MCF 10A (cell line): ENCODE measurements at regions of chr6 and their contacts with region 1.

Region 1: GRCh38 chr6:85482905-85483700 is 33.2 kb downstream of the NT5E start:
- DNase-seq: peak; percentile 75
- H3K4me3 Mint-ChIP-seq: no peak overlapping the region
- H3K27ac Mint-ChIP-seq: no peak overlapping the region
- H3K4me1 Mint-ChIP-seq: peaks cover 6% of the 10 kb centered on the region
- H3K27me3 Mint-ChIP-seq: no peaks in the 10 kb centered on the region
- CTCF ChIP-seq: peak; percentile 96

Region 2: GRCh38 chr6:85344996-85345395 is 138.1 kb before region 1 on chr6:
- CTCF ChIA-PET with region 1: interaction called, 22 read pairs
- POLR2A ChIA-PET with region 1: no interaction called
- intact Hi-C with region 1: no loop called
- DNase-seq: no peak
- H3K4me3 Mint-ChIP-seq: no peak overlapping the region
- H3K27ac Mint-ChIP-seq: no peak overlapping the region
- H3K4me1 Mint-ChIP-seq: no peaks in the 10 kb centered on the region
- H3K27me3 Mint-ChIP-seq: no peaks in the 10 kb centered on the region
- CTCF ChIP-seq: no peak

Region 3: GRCh38 chr6:85360794-85361642 is 122.1 kb before region 1 on chr6:
- CTCF ChIA-PET with region 1: interaction called, 285 read pairs
- POLR2A ChIA-PET with region 1: interaction called, 26 read pairs
- intact Hi-C with region 1: no loop called
- DNase-seq: peak; percentile 94
- H3K4me3 Mint-ChIP-seq: no peak overlapping the region
- H3K27ac Mint-ChIP-seq: peak overlapping the region; percentile 93
- H3K4me1 Mint-ChIP-seq: peaks cover 22% of the 10 kb centered on the region
- H3K27me3 Mint-ChIP-seq: no peaks in the 10 kb centered on the region
- CTCF ChIP-seq: no peak

Region 4: DNA sequence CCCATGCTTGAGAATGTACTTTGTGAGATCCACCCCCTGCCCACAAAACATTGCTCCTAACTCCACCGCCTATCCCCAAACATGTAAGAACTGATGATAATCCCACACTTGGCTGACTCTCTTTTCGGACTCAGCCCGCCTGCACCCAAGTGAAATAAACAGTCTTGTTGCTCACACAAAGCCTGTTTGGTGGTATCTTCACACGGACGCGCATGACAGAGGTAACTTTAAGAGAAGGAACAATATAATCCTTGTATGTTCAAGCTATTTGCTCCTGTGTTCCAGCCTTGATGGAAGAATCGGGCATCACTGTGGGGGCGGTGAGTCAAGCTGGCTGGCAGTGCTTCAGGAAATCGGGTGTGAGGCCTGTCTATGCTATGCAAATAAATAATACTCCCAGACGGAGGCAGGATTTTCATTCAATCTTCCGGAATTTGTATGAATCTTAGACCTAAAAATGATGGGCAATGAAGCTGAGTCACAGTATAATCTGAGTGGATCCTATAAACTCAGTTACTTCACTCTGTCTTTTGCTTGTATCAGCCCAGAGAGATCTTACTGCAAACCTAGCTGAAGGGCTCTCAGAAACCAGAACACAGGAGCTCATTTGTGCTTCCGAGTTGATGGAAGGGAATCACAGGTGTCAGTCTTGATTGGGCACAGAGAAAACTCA is 78.5 kb before region 1 on chr6:
- CTCF ChIA-PET with region 1: interaction called, 18 read pairs
- POLR2A ChIA-PET with region 1: interaction called, 4 read pairs
- intact Hi-C with region 1: loop called (anchors 1 kb)
- DNase-seq: peak; percentile 92
- H3K4me3 Mint-ChIP-seq: peak overlapping the region; percentile 48
- H3K27ac Mint-ChIP-seq: peak overlapping the region; percentile 93
- H3K4me1 Mint-ChIP-seq: peaks cover 49% of the 10 kb centered on the region
- H3K27me3 Mint-ChIP-seq: no peaks in the 10 kb centered on the region
- CTCF ChIP-seq: no peak

Region 5: DNA sequence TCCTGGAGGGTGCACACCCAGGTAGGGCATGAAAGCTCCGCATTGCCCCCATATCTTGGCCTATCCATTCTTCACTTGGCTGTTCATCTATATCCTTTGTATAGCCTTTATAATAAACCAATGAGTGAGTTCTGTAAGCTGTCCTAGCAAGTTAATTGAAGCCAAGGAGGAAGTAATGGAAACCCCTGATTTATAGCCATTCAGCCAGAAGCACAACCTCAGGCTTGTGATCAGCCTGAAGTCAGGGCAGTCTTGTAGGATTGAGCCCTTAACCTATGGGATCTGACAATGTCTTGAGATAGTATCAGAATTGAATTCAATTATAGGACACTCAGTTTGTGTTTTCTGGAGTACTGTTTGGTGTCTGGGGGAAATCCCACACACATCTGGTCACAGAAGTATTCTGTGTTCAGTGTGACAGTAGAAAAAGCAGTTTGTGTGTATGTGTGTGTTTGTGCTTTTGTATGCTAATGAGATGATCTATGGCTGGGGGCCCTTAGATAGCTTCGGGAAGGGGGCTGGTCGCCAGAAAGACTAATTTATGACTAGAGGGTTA is 27.6 kb before region 1 on chr6:
- CTCF ChIA-PET with region 1: interaction called, 65 read pairs
- POLR2A ChIA-PET with region 1: interaction called, 18 read pairs
- intact Hi-C with region 1: loop called (anchors 1 kb)
- DNase-seq: no peak
- H3K4me3 Mint-ChIP-seq: no peak overlapping the region
- H3K27ac Mint-ChIP-seq: no peak overlapping the region
- H3K4me1 Mint-ChIP-seq: peaks cover 74% of the 10 kb centered on the region
- H3K27me3 Mint-ChIP-seq: no peaks in the 10 kb centered on the region
- CTCF ChIP-seq: no peak

Region 6: DNA sequence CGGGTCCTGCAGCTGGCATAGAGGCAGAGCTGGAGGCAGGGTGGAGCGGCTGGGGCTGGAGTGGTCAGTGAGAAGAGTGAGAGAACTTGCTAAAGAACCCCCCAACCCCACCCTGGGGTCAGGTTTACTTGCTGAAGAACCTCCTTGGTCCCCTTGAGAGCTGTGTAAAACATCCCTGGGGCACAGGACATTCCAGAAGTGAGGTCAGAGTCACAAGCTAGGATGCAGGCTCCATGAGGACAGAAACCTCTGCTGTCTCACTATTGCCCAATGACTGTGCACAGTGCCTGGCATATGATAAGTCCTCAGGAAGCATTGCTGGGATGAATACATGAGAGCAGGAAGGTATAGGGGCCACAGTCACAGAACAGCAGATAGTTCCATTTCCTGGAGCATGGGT is 14.8 kb before region 1 on chr6:
- CTCF ChIA-PET with region 1: interaction called, 65 read pairs
- POLR2A ChIA-PET with region 1: interaction called, 4 read pairs
- intact Hi-C with region 1: no loop called
- DNase-seq: no peak
- H3K4me3 Mint-ChIP-seq: no peak overlapping the region
- H3K27ac Mint-ChIP-seq: no peak overlapping the region
- H3K4me1 Mint-ChIP-seq: peaks cover 30% of the 10 kb centered on the region
- H3K27me3 Mint-ChIP-seq: no peaks in the 10 kb centered on the region
- CTCF ChIP-seq: no peak

Region 7: GRCh38 chr6:85537055-85537494 is 54.0 kb after region 1 on chr6:
- CTCF ChIA-PET with region 1: interaction called, 56 read pairs
- POLR2A ChIA-PET with region 1: no interaction called
- intact Hi-C with region 1: no loop called
- DNase-seq: peak; percentile 6
- H3K4me3 Mint-ChIP-seq: no peak overlapping the region
- H3K27ac Mint-ChIP-seq: no peak overlapping the region
- H3K4me1 Mint-ChIP-seq: no peaks in the 10 kb centered on the region
- H3K27me3 Mint-ChIP-seq: no peaks in the 10 kb centered on the region
- CTCF ChIP-seq: peak; percentile 58